ENCODE measurements at regions of chr3 and their contacts with region 1.

Region 1: DNA sequence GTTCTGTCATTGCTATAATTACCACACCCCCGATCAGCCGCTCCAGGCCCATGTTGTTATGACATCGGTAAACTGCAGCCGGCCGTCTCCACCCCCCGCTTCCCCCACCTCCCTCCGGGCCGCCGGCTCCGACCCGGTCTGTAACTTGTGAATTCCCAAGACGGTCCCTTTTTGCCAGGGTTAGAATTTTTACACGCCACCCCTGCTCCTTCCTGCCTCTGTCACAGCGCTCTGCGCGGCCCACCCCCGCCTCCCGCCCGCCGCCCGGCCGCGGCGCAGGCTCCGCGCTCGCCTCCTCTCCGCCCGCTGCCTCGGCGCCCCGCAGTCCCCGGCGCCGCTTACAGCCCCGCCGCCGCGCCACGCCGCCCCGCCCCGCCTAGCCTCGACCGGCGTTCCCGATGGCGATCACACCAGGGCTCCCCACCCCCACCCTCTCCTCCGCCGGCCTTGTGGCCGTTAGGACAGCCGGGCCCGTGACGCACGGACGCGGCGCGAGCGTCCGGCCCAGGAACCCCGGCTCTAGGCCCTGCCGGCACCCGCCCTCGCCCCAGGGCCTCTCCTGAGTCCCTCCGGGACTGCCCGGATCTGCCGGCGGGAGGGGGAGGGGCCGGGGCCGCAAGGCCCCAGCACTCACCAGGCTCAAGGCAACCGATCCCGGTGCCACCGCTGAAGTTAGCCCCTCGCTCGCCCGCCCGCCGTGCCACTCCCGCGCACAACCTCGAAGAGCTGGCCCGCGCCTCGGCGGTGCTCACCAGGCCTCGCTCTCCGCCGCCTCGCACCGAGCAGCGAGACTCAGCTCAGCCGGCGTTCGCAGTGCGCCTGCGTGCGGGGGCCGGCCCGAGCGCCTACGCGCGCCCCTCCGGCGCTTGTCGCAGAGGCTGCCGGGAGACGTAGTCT is at the start of gene KPNA1:
- DNase-seq: peak; percentile 83 to 87 (median 85)
- ATAC-seq: peak; percentile 90
- H3K4me3 ChIP-seq: peak within 1 kb of the TSS; percentile 75
- H3K27ac ChIP-seq: peak within 1 kb of the TSS; percentile 96
- H3K4me1 ChIP-seq: peaks cover 8 to 11% of the 10 kb centered on the region in 2 experiments; a peak in 4 of 5 replicates
- H3K27me3 ChIP-seq: no peaks in the 10 kb centered on the region
- CTCF ChIP-seq: no peak
- EP300 ChIP-seq: no peak
- POLR2A ChIP-seq: peak; percentile 91
- RAD21 ChIP-seq: no peak
- polyA plus RNA-seq, gene KPNA1: 9.3 to 11.7 TPM

Region 2: DNA sequence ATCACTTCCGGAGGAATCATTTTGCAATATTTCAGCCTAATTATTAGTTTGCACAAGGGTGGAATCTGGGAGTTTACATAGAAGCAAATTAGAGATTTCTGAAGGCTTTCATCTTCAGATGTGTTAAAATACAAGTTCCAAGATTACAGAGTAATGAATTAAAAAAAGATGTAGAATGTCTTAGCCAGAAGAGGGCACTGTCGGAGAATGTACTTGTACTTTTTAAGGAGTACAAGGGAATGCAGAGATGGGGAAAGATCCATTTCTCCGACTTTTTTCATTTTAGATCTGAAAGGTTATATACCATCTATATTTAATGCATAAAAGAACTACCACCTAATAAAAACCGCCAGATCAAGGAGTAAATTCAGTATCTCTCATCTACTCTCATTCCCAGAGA is 55.4 kb before region 1 on chr3:
- CTCF ChIA-PET with region 1: no interaction called
- POLR2A ChIA-PET with region 1: no interaction called
- in situ Hi-C with region 1: no loop called
- intact Hi-C with region 1: loop called (anchors 5 kb)
- DNase-seq: peak in 1 of 4 experiments; percentile 15
- ATAC-seq: no peak
- H3K4me3 ChIP-seq: no peak overlapping the region
- H3K27ac ChIP-seq: no peak overlapping the region
- H3K4me1 ChIP-seq: no peaks in the 10 kb centered on the region
- H3K27me3 ChIP-seq: no peaks in the 10 kb centered on the region
- CTCF ChIP-seq: peak in 2 of 3 experiments; percentile 22 to 55; a peak in 3 of 6 replicates
- EP300 ChIP-seq: no peak
- POLR2A ChIP-seq: no peak
- RAD21 ChIP-seq: peak; percentile 32 to 62; a peak in 3 of 4 replicates